Activated naive CD4-positive, alpha-beta T cell treated with anti-CD3 and anti-CD28 coated beads for 36 hours (primary cell): ENCODE measurements at regions of chr15 and their contacts with region 1.

Region 1: DNA sequence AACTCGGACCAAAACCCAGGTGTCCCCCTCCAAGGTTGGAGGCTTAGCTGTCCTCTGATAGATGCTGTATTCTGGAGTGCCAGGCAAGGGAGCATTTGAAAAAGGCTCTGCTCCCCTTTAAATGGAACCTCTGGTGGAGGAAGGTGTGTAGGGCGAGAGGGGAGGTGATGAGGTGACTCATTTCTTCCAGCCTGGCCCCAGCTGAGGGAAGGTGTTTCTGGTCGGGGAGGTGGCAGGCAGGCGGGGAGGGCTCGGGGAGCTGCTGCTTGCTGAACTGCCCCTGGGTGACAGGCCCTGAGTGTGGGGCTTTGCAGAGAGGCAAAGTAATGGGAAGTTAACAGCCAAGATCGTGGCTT is 18.8 kb downstream of the PSTPIP1 start:
- DNase-seq: peak; percentile 97
- H3K4me3 Mint-ChIP-seq: peak overlapping the region; percentile 61
- H3K27ac Mint-ChIP-seq: peak overlapping the region; percentile 89
- H3K4me1 Mint-ChIP-seq: peaks cover 92% of the 10 kb centered on the region
- H3K27me3 Mint-ChIP-seq: no peaks in the 10 kb centered on the region

Region 2: GRCh38 chr15:76401285-76401684 is 612.5 kb before region 1 on chr15:
- CTCF ChIA-PET with region 1: no interaction called
- intact Hi-C with region 1: no loop called
- DNase-seq: no peak
- H3K4me3 Mint-ChIP-seq: no peak overlapping the region
- H3K27ac Mint-ChIP-seq: no peak overlapping the region
- H3K4me1 Mint-ChIP-seq: no peaks in the 10 kb centered on the region
- H3K27me3 Mint-ChIP-seq: no peaks in the 10 kb centered on the region

Region 3: DNA sequence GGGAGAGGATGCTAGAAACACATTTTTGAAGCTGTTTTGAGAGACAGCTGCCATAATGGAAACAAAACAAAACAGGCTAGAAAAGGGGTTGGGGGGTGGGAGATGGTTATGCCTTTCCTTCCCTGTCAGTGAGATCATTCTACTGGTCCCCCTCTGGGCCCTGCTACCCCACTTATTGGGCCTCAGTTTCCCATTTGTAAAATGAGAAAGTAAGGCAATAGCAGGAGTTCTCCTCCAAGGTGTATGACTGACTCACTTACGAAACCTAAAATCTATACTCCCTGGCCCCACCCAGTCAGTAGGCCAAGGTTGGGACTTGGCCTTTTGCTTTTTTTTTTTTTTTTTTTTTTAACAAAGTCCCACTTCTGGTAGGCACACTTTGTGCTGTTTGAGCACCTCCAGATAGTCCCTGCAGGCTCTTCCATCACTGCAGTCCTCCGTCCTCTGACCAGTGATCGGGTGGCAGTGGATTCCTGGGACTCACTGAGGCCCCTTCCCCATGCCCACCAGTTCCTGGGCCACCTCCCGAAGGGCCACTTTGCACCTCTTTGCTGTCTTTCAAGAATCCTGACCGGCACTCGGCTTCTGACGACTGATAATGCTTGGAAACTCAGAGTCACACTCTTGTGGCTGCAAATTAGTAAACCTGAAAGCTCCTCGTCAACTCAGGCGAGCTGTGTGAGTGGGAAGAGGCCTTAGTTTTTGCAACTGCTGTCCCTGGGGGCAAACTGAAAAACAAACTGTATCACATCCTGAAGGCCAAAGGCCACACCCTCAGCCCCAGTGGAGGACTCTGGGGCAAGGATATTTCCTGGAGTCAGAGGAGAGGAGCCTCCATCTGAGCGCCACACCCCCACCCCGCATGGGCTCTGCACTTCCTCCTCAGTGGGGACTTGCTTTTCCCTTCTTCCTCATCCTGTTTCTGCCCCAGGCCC is 25.6 kb before region 1 on chr15:
- CTCF ChIA-PET with region 1: no interaction called
- intact Hi-C with region 1: loop called (anchors 1 kb)
- DNase-seq: peak; percentile 92
- H3K4me3 Mint-ChIP-seq: peak overlapping the region; percentile 53
- H3K27ac Mint-ChIP-seq: peak overlapping the region; percentile 98
- H3K4me1 Mint-ChIP-seq: peaks cover 43% of the 10 kb centered on the region
- H3K27me3 Mint-ChIP-seq: no peaks in the 10 kb centered on the region

Region 4: GRCh38 chr15:77002954-77003912 is 10.5 kb before region 1 on chr15:
- CTCF ChIA-PET with region 1: interaction called, 9 read pairs
- intact Hi-C with region 1: loop called (anchors 1 kb)
- DNase-seq: peak; percentile 87
- H3K4me3 Mint-ChIP-seq: peak overlapping the region; percentile 41
- H3K27ac Mint-ChIP-seq: peak overlapping the region; percentile 84
- H3K4me1 Mint-ChIP-seq: peaks cover 82% of the 10 kb centered on the region
- H3K27me3 Mint-ChIP-seq: no peaks in the 10 kb centered on the region

Region 5: DNA sequence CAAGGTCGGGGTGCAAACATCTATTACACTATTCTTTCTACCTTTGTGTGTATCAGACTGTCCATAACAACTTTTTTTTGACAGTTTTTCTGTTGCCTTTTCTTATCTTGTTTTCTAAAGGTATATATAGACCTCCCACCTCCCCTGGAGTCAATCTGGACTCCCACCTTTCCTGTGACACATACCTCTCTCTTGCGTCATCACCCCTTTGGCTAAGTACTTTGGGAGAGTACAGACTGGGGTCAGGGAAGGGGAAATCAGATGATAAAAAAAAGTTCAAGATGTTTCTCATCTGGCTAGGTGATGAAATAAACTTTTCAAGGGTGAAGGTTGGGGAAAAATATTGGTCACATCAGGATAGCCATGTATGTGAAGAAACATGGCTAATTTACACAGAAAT is 40.0 kb after region 1 on chr15:
- CTCF ChIA-PET with region 1: no interaction called
- intact Hi-C with region 1: no loop called
- DNase-seq: no peak
- H3K4me3 Mint-ChIP-seq: no peak overlapping the region
- H3K27ac Mint-ChIP-seq: no peak overlapping the region
- H3K4me1 Mint-ChIP-seq: peaks cover 12% of the 10 kb centered on the region
- H3K27me3 Mint-ChIP-seq: no peaks in the 10 kb centered on the region